Esophagus muscularis mucosa (tissue), 4 donors: ENCODE measurements at regions of chr5 and their contacts with region 1.

Region 1: DNA sequence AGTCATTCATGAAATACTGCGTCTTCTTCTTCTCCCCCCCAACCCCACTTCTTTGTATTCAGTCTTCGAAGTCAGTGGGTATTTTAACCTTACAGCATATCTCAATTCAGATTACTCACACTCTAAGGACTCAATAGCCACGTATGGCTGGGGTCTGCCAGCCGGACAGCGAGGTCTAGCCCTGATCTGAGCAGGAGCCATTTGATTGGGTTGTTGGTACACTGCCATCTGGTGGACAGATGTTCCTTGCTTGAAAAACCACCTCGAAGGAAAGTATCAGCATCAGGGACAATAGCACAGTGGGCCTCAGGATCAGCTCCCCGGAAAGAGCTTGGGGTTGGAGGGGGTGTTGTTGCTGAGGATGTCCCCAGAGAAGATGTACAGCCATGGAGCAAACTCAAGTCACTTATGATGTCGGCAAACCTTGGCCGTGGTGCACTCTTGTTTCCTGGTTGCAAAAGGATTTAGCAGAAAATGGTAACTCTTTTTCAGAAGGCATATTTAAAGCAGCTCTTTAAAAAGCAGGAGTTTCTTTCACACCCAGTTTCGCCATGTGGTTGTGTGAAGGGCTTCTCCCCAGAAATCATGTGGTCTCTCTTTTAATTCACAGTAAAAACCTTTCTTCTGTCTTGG is 31.7 kb upstream of the KCNMB1 start:
- DNase-seq: no peak
- H3K4me3 ChIP-seq: no peak overlapping the region
- H3K27ac ChIP-seq: no peak overlapping the region
- H3K4me1 ChIP-seq: peaks cover 0 to 25% (median 19%) of the 10 kb centered on the region in 4 donors
- H3K27me3 ChIP-seq: no peaks in the 10 kb centered on the region
- CTCF ChIP-seq: peak; percentile 75 to 82 (median 78)
- EP300 ChIP-seq: no peak
- POLR2A ChIP-seq: no peak

Region 2: GRCh38 chr5:170100066-170100943 is 320.6 kb before region 1 on chr5:
- intact Hi-C with region 1: loop called (anchors 5 kb)
- DNase-seq: peak; percentile 97
- H3K4me3 ChIP-seq: no peak overlapping the region
- H3K27ac ChIP-seq: no peak overlapping the region
- H3K4me1 ChIP-seq: peaks cover 0 to 8% (median 3%) of the 10 kb centered on the region in 4 donors
- H3K27me3 ChIP-seq: no peaks in the 10 kb centered on the region
- CTCF ChIP-seq: peak; percentile 54 to 65 (median 59)
- EP300 ChIP-seq: no peak
- POLR2A ChIP-seq: no peak

Region 3: GRCh38 chr5:170225326-170226128 is 195.4 kb before region 1 on chr5:
- intact Hi-C with region 1: loop called (anchors 1 kb)
- DNase-seq: peak; percentile 96
- H3K4me3 ChIP-seq: no peak overlapping the region
- H3K27ac ChIP-seq: peak overlapping the region in 1 of 4 donors; percentile 27
- H3K4me1 ChIP-seq: peaks cover 0 to 59% (median 47%) of the 10 kb centered on the region in 4 donors
- H3K27me3 ChIP-seq: no peaks in the 10 kb centered on the region
- CTCF ChIP-seq: peak; percentile 73 to 84 (median 81)
- EP300 ChIP-seq: no peak
- POLR2A ChIP-seq: no peak

Region 4: GRCh38 chr5:170267431-170268152 is 153.3 kb before region 1 on chr5:
- intact Hi-C with region 1: loop called (anchors 2 kb)
- DNase-seq: no peak
- H3K4me3 ChIP-seq: peak overlapping the region in 3 of 4 donors; percentile 22 to 31 (median 27)
- H3K27ac ChIP-seq: peak overlapping the region in 2 of 4 donors; percentile 51 to 58
- H3K4me1 ChIP-seq: peaks cover 8 to 39% (median 31%) of the 10 kb centered on the region in 4 donors
- H3K27me3 ChIP-seq: peaks cover 0 to 6% (median 0%) of the 10 kb centered on the region in 4 donors
- CTCF ChIP-seq: peak; percentile 86 to 88 (median 88)
- EP300 ChIP-seq: no peak
- POLR2A ChIP-seq: no peak

Region 5: GRCh38 chr5:170360709-170361108 is 60.2 kb before region 1 on chr5:
- intact Hi-C with region 1: loop called (anchors 5 kb)
- DNase-seq: no peak
- H3K4me3 ChIP-seq: no peak overlapping the region
- H3K27ac ChIP-seq: peak overlapping the region; percentile 33 to 63 (median 46)
- H3K4me1 ChIP-seq: peaks cover 28 to 68% (median 58%) of the 10 kb centered on the region in 4 donors
- H3K27me3 ChIP-seq: no peaks in the 10 kb centered on the region
- CTCF ChIP-seq: no peak
- EP300 ChIP-seq: no peak
- POLR2A ChIP-seq: no peak